ENCODE measurements at regions of chr13 and their contacts with region 1.

Region 1: GRCh38 chr13:40777166-40777808 is 6.3 kb upstream of the MRPS31 start:
- DNase-seq: peak; percentile 54
- H3K4me3 Mint-ChIP-seq: peak overlapping the region; percentile 70
- H3K27ac Mint-ChIP-seq: peak overlapping the region; percentile 98
- H3K4me1 Mint-ChIP-seq: peaks cover 42% of the 10 kb centered on the region
- H3K27me3 Mint-ChIP-seq: no peaks in the 10 kb centered on the region

Region 2: GRCh38 chr13:40756042-40756441 is 21.2 kb before region 1 on chr13:
- CTCF ChIA-PET with region 1: no interaction called
- POLR2A ChIA-PET with region 1: no interaction called
- DNase-seq: no peak
- H3K4me3 Mint-ChIP-seq: no peak overlapping the region
- H3K27ac Mint-ChIP-seq: no peak overlapping the region
- H3K4me1 Mint-ChIP-seq: peaks cover 4% of the 10 kb centered on the region
- H3K27me3 Mint-ChIP-seq: no peaks in the 10 kb centered on the region

Region 3: GRCh38 chr13:40789275-40790133 is 12.2 kb after region 1 on chr13 and contains the start of gene SLC25A15:
- CTCF ChIA-PET with region 1: interaction called, 14 read pairs
- POLR2A ChIA-PET with region 1: no interaction called
- DNase-seq: peak; percentile 69
- H3K4me3 Mint-ChIP-seq: peak within 1 kb of the TSS; percentile 80
- H3K27ac Mint-ChIP-seq: peak within 1 kb of the TSS; percentile 83
- H3K4me1 Mint-ChIP-seq: peaks cover 34% of the 10 kb centered on the region
- H3K27me3 Mint-ChIP-seq: no peaks in the 10 kb centered on the region
- total RNA-seq, gene SLC25A15: 14.4 to 15.5 TPM

Measured in activated CD4-positive, alpha-beta T cell treated with anti-CD3 and anti-CD28 coated beads, Interleukin-2, amount 10 ng/mL, durations not matched to agents 7 days and 5 days (primary cell).